ENCODE measurements at regions of chr17 and their contacts with region 1.

Region 1: DNA sequence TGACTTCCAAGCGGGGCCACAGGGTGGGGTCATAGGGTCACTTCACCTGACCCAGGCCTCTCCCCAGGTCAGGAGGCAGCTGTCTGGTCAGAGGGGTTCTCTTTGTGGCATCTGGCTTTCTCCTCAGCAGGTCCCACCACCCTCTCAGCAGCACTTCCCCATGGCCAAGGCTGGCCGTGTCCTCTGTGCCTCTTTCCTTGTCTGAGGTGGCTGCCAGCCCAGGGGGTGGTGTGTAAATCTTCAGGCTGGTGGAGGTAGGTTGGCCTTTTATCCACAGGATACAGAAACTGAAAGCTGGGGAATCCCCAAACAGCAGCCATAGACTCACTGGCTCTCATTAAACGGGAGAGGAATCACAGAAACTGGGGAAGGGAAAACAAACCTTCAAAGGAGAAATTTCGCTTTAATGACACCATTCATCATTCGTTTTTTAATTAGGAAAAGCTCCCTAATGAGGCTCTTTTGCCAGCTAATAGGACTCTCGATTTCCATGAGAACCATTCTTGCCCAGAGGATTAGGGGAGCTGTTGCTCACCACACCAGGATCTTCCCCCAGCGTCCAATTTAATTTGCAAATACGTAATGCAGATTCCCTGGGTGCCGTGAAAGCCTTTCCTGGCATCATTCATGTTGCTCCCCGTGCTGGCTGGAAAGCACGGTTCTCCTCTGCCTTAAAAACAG is 18.0 kb downstream of the C17orf75 start:
- DNase-seq: peak in 2 of 3 donors; percentile 69 to 74
- ATAC-seq: peak; percentile 78 to 88 (median 80)
- H3K4me3 ChIP-seq: peak overlapping the region; percentile 1 to 47 (median 28)
- H3K27ac ChIP-seq: peak overlapping the region in 2 of 3 donors; percentile 49 to 55
- H3K4me1 ChIP-seq: no peaks in the 10 kb centered on the region
- H3K27me3 ChIP-seq: no peaks in the 10 kb centered on the region
- CTCF ChIP-seq: no peak
- POLR2A ChIP-seq: no peak

Region 2: GRCh38 chr17:32253117-32253611 is 70.8 kb before region 1 on chr17:
- intact Hi-C with region 1: loop called (anchors 5 kb)
- DNase-seq: peak; percentile 77 to 80 (median 79)
- ATAC-seq: peak; percentile 99 to 100 (median 100)
- H3K4me3 ChIP-seq: no peak overlapping the region
- H3K27ac ChIP-seq: no peak overlapping the region
- H3K4me1 ChIP-seq: no peaks in the 10 kb centered on the region
- H3K27me3 ChIP-seq: no peaks in the 10 kb centered on the region
- CTCF ChIP-seq: peak; percentile 93 to 98 (median 96)
- POLR2A ChIP-seq: no peak

Region 3: DNA sequence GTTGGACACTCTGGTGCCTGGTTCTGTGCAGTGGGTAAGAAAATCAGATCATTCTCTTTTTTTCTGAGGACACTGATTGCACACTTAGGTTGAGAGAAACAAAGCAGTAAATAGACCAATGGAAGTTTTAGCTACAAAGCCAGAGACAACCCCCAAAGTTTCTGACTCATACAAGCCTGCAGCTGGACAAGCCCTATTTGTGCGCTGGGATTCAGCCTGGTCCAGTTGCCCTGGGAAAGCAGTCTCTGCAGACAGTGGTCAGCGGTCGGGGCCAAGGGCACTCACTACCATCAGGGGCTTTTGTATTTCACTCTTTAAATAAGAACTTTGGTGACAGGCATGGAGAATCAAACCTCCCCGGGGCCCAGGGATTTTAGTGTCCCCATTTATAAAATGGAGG is 64.4 kb before region 1 on chr17:
- intact Hi-C with region 1: loop called (anchors 5 kb)
- DNase-seq: no peak
- ATAC-seq: no peak
- H3K4me3 ChIP-seq: no peak overlapping the region
- H3K27ac ChIP-seq: no peak overlapping the region
- H3K4me1 ChIP-seq: no peaks in the 10 kb centered on the region
- H3K27me3 ChIP-seq: no peaks in the 10 kb centered on the region
- CTCF ChIP-seq: no peak
- POLR2A ChIP-seq: no peak

Measured in right lobe of liver (tissue), 6 donors.